ENCODE measurements at regions of chr3 and their contacts with region 1.

Region 1: DNA sequence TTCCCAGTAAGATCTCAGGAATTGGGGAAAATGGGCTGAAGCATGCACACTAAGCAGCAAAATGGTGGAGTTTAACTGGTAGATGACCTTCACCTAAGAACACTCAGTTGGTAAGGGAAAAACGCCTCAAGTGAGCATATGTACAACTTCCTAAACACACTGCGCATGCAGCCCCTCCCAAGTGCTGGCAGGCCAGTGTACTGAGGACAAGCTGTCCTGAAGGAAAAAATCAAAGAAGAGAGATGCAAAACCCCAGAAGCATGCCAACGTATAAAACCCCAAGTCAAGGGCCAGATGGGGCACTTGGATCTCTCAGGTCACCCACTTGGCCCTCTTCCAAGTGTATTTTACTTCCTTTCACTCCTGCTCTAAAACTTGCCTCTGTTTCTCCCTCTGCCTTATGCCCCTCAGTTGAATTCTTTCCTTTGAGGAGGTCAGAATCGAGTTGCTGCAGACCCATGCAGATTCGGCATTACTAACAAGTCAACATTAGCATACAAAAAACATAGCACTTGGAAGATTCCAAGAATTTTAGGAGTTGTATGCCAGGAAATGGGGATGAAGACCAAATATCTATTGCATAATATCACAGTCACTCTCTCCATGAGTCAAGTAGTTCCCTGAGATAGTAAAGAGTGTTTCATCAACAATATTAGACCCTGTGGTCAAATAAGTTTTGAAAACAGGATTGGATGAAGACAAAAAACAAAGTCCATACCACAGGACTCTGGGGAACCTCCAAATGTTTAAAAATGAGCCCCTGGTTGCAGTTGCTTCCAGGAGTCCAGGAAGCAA is 10.8 kb upstream of the FYCO1 start:
- DNase-seq: no peak
- H3K4me3 Mint-ChIP-seq: no peak overlapping the region
- H3K27ac Mint-ChIP-seq: no peak overlapping the region
- H3K4me1 Mint-ChIP-seq: peaks cover 9% of the 10 kb centered on the region
- H3K27me3 Mint-ChIP-seq: no peaks in the 10 kb centered on the region

Region 2: DNA sequence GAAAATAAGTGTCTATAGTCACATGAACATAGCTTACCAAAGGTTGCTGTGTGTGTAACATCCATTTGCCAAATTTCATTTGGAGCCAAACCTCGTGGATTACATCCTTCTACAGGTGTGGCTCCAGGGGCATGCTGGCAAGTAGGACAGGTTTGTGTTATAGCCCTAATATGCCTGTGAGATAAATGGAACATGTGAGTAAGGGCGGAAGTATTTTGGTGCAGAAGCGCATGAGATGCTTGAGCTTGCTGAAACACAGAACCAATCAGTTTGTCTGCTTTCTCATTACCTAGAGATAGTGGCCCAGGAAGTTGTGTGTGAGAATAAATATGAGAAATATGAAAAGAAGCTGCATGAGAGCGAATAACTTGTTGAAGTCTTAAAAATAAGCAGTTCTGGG is 42.7 kb after region 1 on chr3:
- intact Hi-C with region 1: loop called (anchors 5 kb)
- DNase-seq: peak; percentile 49
- H3K4me3 Mint-ChIP-seq: no peak overlapping the region
- H3K27ac Mint-ChIP-seq: no peak overlapping the region
- H3K4me1 Mint-ChIP-seq: peaks cover 15% of the 10 kb centered on the region
- H3K27me3 Mint-ChIP-seq: peaks cover 34% of the 10 kb centered on the region

Measured in activated CD4-positive, alpha-beta T cell treated with anti-CD3 and anti-CD28 coated beads, Interleukin-2, amount 10 ng/mL, durations not matched to agents 24 days and 14 days (primary cell).